AG04450 (cell line): ENCODE measurements at regions of chr9 and their contacts with region 1.

Region 1: DNA sequence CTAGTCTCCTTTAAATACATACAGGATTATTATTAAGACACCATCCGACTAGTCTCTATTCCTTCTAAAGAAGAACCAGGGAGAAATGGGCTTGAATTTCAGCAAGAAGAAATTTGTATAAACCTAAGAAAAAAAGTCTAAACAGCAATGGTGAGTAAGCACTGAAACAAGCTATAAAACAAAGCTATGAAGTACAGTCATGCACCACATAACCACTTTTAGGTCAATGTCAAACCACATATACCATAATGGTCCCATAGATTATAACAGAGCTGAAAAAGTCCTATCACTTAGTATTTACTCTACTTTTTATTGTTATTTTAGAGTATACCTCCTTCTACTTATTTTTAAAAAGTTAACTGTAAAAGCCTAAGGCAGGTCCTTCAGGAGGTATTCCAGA is 102.0 kb upstream of the NFIB start:
- DNase-seq: peak; percentile 70
- H3K4me3 ChIP-seq: no peak overlapping the region
- H3K27ac ChIP-seq: no peak overlapping the region
- H3K27me3 ChIP-seq: peaks cover 62% of the 10 kb centered on the region
- CTCF ChIP-seq: no peak

Region 2: GRCh38 chr9:14326264-14326826 is 89.6 kb before region 1 on chr9:
- CTCF ChIA-PET with region 1: no interaction called
- POLR2A ChIA-PET with region 1: interaction called, 10 read pairs
- DNase-seq: no peak
- H3K4me3 ChIP-seq: no peak overlapping the region
- H3K27ac ChIP-seq: no peak overlapping the region
- H3K27me3 ChIP-seq: peaks cover 34% of the 10 kb centered on the region
- CTCF ChIP-seq: no peak

Region 3: GRCh38 chr9:14393418-14393817 is 22.5 kb before region 1 on chr9:
- CTCF ChIA-PET with region 1: no interaction called
- POLR2A ChIA-PET with region 1: no interaction called
- DNase-seq: no peak
- H3K4me3 ChIP-seq: no peak overlapping the region
- H3K27ac ChIP-seq: no peak overlapping the region
- H3K27me3 ChIP-seq: peaks cover 27% of the 10 kb centered on the region
- CTCF ChIP-seq: no peak

Region 4: GRCh38 chr9:14627513-14627912 is 211.6 kb after region 1 on chr9:
- CTCF ChIA-PET with region 1: no interaction called
- POLR2A ChIA-PET with region 1: no interaction called
- DNase-seq: no peak
- H3K4me3 ChIP-seq: no peak overlapping the region
- H3K27ac ChIP-seq: no peak overlapping the region
- H3K27me3 ChIP-seq: no peaks in the 10 kb centered on the region
- CTCF ChIP-seq: no peak